Activated CD8-positive, alpha-beta T cell treated with anti-CD3 and anti-CD28 coated beads for 36 hours (primary cell): ENCODE measurements at regions of chr19 and their contacts with region 1.

Region 1: DNA sequence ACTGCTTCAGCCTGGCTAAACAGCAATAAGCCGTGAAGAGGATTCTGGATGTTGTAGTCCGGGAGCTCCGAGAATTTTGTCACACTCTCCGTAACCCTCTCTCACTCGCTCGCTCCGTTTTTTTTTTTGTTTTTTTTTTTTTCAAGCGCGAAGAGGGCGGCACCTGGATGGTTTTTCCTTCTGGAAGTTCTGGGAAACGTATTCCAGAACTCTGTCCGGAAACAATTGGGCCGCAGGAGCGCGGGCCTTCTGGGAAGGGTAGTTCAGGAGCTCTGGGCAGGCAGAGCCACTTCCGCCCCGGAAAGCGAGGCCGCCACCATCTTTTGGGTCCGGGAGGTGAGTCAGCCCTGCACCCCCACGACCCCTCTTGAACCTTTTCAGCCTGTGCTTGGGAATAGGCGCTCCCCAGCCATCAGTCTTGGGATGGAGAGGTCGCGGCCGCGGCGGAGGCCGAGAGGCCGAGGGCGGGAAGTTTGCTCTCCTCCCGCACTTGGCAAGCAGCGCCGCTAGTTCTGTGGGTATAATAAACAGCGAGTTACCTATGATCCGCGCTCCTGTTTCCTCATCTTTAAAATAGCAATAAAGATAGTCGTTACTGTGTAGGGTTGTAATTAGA is at the start of gene ZNF227:
- DNase-seq: peak; percentile 89
- ATAC-seq: peak; percentile 96
- H3K4me3 Mint-ChIP-seq: peak within 1 kb of the TSS; percentile 84
- H3K27ac Mint-ChIP-seq: peak within 1 kb of the TSS; percentile 94
- H3K4me1 Mint-ChIP-seq: peaks cover 24% of the 10 kb centered on the region
- H3K27me3 Mint-ChIP-seq: no peaks in the 10 kb centered on the region
- CTCF ChIP-seq: no peak
- total RNA-seq, gene ZNF227: 17.7 to 18.5 TPM

Region 2: DNA sequence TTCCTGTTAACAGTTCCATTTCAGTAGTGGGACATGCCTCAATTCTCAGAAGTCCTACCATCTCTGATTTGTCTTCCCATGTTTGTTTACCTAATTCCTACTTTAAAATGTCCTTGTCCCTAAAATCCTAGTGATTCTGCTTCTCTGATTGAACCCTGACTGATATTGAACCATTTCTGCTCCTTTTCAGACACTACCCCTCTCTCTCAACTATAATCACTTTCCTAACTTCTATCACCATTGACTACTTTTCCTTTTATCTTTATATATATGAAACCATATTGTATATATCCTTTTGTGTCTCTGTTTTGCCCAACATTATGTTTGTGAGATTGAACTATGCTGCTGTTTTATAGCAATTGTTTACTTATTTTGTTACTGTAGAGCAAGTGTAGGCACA is 15.6 kb before region 1 on chr19:
- CTCF ChIA-PET with region 1: no interaction called
- POLR2A ChIA-PET with region 1: no interaction called
- intact Hi-C with region 1: no loop called
- DNase-seq: no peak
- ATAC-seq: no peak
- H3K4me3 Mint-ChIP-seq: no peak overlapping the region
- H3K27ac Mint-ChIP-seq: no peak overlapping the region
- H3K4me1 Mint-ChIP-seq: no peaks in the 10 kb centered on the region
- H3K27me3 Mint-ChIP-seq: no peaks in the 10 kb centered on the region
- CTCF ChIP-seq: no peak

Region 3: DNA sequence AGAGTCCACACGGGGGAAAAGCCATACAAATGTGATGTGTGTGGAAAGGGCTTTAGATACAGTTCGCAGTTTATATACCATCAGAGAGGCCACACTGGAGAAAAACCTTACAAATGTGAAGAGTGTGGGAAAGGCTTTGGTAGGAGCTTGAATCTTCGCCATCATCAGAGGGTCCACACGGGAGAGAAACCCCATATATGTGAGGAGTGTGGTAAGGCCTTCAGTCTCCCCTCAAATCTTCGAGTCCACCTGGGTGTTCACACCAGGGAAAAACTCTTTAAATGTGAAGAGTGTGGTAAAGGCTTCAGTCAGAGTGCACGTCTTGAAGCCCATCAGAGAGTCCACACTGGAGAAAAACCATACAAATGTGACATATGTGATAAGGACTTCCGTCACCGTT is 24.0 kb after region 1 on chr19:
- CTCF ChIA-PET with region 1: no interaction called
- POLR2A ChIA-PET with region 1: no interaction called
- intact Hi-C with region 1: no loop called
- DNase-seq: no peak
- ATAC-seq: no peak
- H3K4me3 Mint-ChIP-seq: no peak overlapping the region
- H3K27ac Mint-ChIP-seq: no peak overlapping the region
- H3K4me1 Mint-ChIP-seq: no peaks in the 10 kb centered on the region
- H3K27me3 Mint-ChIP-seq: no peaks in the 10 kb centered on the region
- CTCF ChIP-seq: no peak

Region 4: DNA sequence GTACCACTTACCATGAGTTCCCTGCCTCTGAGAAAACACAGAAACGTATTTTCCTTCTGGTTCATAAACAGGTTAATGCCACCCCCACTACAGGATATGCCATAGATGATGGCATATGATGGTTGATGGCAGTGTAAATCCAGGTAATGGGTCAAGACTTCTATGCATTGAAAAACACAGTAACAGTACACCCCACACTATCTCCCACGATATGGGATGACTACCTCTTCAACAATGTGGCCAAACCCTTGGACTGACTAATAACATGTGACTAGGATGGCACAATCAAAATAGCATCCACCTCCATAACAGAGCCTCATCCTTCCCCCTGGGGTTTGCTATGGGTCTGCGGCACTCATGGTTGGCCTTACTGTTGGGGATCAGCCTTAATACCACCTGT is 70.5 kb after region 1 on chr19:
- CTCF ChIA-PET with region 1: no interaction called
- POLR2A ChIA-PET with region 1: no interaction called
- intact Hi-C with region 1: no loop called
- DNase-seq: no peak
- ATAC-seq: no peak
- H3K4me3 Mint-ChIP-seq: no peak overlapping the region
- H3K27ac Mint-ChIP-seq: no peak overlapping the region
- H3K4me1 Mint-ChIP-seq: no peaks in the 10 kb centered on the region
- H3K27me3 Mint-ChIP-seq: no peaks in the 10 kb centered on the region
- CTCF ChIP-seq: no peak

Region 5: DNA sequence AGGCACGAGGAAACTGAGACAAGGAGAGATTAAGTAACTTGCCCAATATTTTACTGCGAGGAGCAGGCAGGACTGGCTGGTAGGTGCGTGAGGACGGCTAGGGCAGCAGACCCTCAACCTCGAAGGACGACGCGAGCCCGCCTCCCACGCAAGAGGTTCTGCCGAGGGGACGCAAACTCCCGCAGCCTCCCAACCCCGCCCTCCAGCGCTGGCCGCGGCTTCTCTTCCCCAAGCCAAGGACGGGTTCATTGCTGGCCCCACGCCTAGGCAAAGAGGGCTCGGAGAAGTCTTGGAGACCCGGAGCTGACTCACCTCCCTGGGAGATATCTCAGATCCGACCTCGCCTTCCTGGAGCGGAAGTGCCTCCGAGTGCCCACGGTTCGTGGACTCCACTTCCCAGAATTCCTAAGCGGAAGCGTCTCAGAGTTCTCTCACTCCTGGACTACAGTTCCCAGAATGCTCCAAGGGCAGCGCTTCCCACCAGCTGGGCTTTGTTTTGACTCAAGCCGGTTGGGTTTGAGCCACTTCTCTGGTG is 92.4 kb after region 1 on chr19 and contains the start of gene ZNF235:
- CTCF ChIA-PET with region 1: no interaction called
- POLR2A ChIA-PET with region 1: interaction called, 4 read pairs
- intact Hi-C with region 1: loop called (anchors 10 kb)
- DNase-seq: peak; percentile 85
- ATAC-seq: peak; percentile 93
- H3K4me3 Mint-ChIP-seq: peak within 1 kb of the TSS; percentile 83
- H3K27ac Mint-ChIP-seq: peak within 1 kb of the TSS; percentile 81
- H3K4me1 Mint-ChIP-seq: peaks cover 20% of the 10 kb centered on the region
- H3K27me3 Mint-ChIP-seq: peaks cover 3% of the 10 kb centered on the region
- CTCF ChIP-seq: no peak
- total RNA-seq, gene ZNF235: 2.7 to 3.6 TPM